ENCODE measurements at regions of chr18 and their contacts with region 1.

Region 1: DNA sequence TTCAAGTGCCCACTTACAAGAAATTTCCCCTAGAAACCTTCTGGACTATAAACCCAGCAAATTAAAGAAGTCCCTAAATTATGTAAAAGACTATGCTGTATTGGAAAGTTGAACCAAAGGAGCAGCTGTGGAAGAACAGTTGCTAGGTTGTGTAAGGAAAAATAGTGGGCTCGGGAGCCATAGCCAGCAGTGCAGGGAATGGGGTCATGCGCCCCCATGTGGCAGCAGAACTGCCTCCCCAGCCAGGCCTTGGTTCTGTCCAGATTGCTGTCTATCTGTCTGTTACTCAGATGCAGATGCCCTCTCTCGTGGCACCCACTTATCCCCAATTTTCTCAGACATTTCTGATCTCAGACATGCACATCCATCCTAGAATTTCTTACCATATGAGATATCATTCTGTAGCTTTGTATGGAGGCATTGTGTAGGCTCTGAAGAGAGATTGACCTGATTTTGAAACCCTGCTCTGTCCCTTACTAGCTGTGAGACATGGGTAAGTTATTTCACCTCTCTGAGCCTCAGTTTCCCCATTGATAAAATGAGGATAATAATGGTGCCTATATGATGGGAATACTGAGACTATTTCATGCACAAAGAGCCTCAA is 258.3 kb downstream of the SS18 start:
- DNase-seq: no peak
- ATAC-seq: peak; percentile 92
- H3K4me3 ChIP-seq: no peak overlapping the region
- H3K27ac ChIP-seq: no peak overlapping the region
- H3K4me1 ChIP-seq: no peaks in the 10 kb centered on the region
- H3K27me3 ChIP-seq: peaks cover 0 to 2% of the 10 kb centered on the region in 2 experiments; a peak in 1 of 4 replicates
- CTCF ChIP-seq: peak; percentile 73 to 86 (median 79)
- EP300 ChIP-seq: no peak
- POLR2A ChIP-seq: no peak
- RAD21 ChIP-seq: peak; percentile 60

Region 2: DNA sequence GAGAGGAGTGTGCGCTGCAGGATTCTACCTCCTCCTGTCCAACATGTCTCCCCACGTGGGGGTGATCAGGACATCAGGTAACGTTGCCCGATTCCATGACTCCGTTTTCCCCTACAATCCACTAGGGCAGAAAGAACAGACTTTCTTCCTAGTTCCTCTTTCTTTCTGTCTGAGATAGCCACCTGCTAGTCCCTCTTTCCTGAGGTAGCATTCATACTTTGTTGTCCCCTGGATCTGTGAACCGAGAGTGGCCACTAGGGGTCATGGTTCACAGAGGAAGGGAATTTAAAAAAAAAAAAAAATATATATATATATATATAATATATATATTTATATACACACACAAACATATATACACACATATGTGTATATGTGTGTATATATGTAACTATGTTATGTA is 270.2 kb before region 1 on chr18:
- CTCF ChIA-PET with region 1: no interaction called
- POLR2A ChIA-PET with region 1: no interaction called
- RAD21 ChIA-PET with region 1: no interaction called
- SMC1A ChIA-PET with region 1: no interaction called
- in situ Hi-C with region 1: no loop called
- intact Hi-C with region 1: loop called (anchors 5 kb)
- DNase-seq: no peak
- ATAC-seq: peak; percentile 53
- H3K4me3 ChIP-seq: no peak overlapping the region
- H3K27ac ChIP-seq: no peak overlapping the region
- H3K4me1 ChIP-seq: no peaks in the 10 kb centered on the region
- H3K27me3 ChIP-seq: no peaks in the 10 kb centered on the region; a peak in 1 of 4 replicates
- CTCF ChIP-seq: peak in 1 of 3 experiments; percentile 17; a peak in 1 of 6 replicates
- EP300 ChIP-seq: no peak
- POLR2A ChIP-seq: no peak
- RAD21 ChIP-seq: peak; percentile 43

Region 3: GRCh38 chr18:25819746-25820363 is 12.2 kb before region 1 on chr18:
- CTCF ChIA-PET with region 1: interaction called, 14 read pairs
- POLR2A ChIA-PET with region 1: no interaction called
- RAD21 ChIA-PET with region 1: no interaction called
- SMC1A ChIA-PET with region 1: interaction called, 3 read pairs
- in situ Hi-C with region 1: no loop called
- intact Hi-C with region 1: no loop called
- DNase-seq: no peak
- ATAC-seq: no peak
- H3K4me3 ChIP-seq: no peak overlapping the region
- H3K27ac ChIP-seq: no peak overlapping the region
- H3K4me1 ChIP-seq: no peaks in the 10 kb centered on the region
- H3K27me3 ChIP-seq: no peaks in the 10 kb centered on the region; a peak in 1 of 4 replicates
- CTCF ChIP-seq: no peak
- EP300 ChIP-seq: no peak
- POLR2A ChIP-seq: no peak
- RAD21 ChIP-seq: no peak